Activated T-helper 1 cell treated with anti-CD3 and anti-CD28 coated beads, Interleukin-12 subunit alpha, Interleukin-12 subunit beta, Interleukin-2, Interleukin-4 antibody, amounts not matched to agents 30 ng/mL and 10 ng/mL and 1 ng/mL, durations not matched to agents 14 hours and 24 hours and 36 hours (primary cell): ENCODE measurements at regions of chr2 and their contacts with region 1.

Region 1: DNA sequence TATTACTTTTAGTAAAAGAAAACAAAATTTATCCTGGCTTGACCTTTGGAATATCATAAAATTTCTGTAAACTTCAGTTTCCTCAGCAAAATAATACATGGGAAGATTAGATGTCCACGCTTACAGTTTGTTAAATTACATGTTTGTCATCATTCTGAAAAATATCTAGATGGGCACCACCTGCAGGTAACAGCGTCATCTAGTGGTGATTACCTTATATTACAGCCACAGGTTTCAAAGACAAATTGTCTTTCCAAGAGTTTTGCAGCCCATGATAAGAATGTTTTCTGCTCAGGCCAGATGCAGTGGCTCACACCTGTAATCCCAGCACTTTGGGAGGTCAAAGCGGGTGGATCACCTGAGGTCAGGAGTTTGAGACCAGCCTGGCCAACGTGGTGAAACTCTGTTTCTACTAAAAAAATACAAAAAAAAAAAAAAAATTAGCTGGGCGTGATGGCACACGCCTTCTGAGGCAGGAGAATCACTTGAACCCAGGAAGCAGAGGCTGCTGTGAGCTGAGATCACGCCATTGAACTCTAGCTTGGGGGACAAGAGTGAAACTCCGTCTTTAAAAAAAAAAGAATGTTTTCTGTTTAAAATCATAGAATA is 96.3 kb upstream of the RASGRP3 start:
- DNase-seq: no peak
- H3K4me3 Mint-ChIP-seq: no peak overlapping the region
- H3K27ac Mint-ChIP-seq: no peak overlapping the region
- H3K4me1 Mint-ChIP-seq: no peaks in the 10 kb centered on the region
- H3K27me3 Mint-ChIP-seq: peaks cover 3% of the 10 kb centered on the region

Region 2: GRCh38 chr2:33033606-33034081 is 346.5 kb before region 1 on chr2:
- intact Hi-C with region 1: loop called (anchors 1 kb)
- DNase-seq: no peak
- H3K4me3 Mint-ChIP-seq: no peak overlapping the region
- H3K27ac Mint-ChIP-seq: no peak overlapping the region
- H3K4me1 Mint-ChIP-seq: no peaks in the 10 kb centered on the region
- H3K27me3 Mint-ChIP-seq: peaks cover 4% of the 10 kb centered on the region

Region 3: DNA sequence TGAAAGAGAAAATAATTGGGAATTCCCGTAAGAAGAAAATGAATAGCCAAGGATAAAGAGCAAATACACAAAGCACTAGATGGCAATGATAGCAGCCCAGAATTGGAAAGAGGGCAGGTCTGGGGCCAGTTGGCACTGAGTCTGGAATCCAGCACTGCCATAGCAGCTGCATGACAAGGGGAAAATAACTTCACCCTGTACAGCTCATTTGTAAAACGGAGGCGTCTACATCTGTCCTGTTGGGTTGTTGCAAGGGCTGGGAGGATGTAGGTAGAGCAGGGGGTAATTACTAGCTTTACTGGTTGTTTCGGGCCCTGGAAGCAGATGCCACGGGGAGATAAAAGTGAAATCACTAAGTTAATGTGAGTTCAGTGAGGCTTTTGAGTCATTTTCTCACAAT is 13.6 kb before region 1 on chr2:
- intact Hi-C with region 1: no loop called
- DNase-seq: no peak
- H3K4me3 Mint-ChIP-seq: no peak overlapping the region
- H3K27ac Mint-ChIP-seq: no peak overlapping the region
- H3K4me1 Mint-ChIP-seq: no peaks in the 10 kb centered on the region
- H3K27me3 Mint-ChIP-seq: no peaks in the 10 kb centered on the region